Gastrocnemius medialis (tissue), 4 donors: ENCODE measurements at regions of chr1 and their contacts with region 1.

Region 1: DNA sequence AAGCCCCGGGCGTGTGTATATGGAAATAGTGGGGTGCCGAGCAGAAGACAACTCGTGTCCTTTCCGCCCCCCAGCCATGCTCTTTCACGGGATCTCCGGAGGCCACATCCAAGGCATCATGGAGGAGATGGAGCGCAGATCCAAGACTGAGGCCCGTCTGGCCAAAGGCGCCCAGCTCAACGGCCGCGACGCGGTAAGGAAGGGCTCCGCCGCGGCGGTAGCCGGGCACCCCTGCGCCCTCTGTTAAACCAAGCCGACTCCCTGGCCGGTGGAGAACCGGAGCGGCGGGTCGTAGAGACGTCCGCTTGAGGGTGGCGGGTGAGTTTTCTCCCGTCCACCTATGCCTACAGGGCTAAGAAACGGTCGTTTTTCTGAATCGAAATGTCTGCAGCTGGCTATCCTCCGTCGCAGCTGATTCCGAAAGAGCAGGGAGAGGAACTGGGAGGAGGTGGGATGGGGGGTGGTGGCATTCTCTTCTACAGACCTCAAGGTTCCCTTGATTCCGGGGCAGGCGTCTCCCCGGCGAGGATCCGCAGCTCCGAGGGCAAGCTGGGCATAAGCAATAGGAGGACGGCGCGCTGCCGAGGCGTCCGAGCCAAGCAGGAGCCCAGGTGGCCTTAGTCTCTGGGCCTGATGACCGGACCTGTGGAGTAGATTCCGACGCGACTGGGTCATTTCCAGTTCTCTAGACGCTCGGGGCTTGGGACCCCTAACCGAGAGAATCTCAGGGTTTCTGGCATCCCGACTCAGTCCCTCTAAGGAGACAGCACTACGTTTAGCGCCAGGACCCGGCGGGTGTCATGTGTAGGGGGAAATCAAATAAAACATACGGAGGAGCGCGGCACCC is 856 bp downstream of the LHX9 start:
- DNase-seq: no peak
- ATAC-seq: no peak
- H3K4me3 ChIP-seq: peak overlapping the region; percentile 33 to 59 (median 47)
- H3K27ac ChIP-seq: no peak overlapping the region
- H3K4me1 ChIP-seq: peaks cover 30 to 42% of the 10 kb centered on the region in 2 donors
- H3K27me3 ChIP-seq: peaks cover 96 to 100% (median 98%) of the 10 kb centered on the region in 3 donors
- CTCF ChIP-seq: no peak
- POLR2A ChIP-seq: no peak

Region 2: DNA sequence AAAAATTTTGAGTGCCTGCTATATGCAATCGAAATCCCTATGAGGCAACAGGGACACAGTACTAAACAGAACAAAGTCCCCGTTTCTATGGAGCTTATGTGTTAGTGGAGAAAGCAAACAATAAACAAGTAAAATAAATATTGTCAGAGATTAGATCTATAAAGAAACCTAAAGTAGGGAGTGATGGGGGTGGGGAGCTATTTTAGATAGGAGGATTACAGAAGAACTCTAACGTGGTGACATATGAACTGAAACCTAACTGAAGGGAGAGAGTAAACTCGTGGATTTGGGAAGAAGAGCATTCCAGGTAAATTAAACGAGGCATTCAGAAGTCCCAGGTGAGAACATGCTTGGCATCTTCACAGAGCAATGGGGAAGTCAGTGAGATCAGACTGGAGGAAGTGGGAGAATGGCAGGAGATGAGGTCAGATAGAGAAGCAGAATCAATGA is 297.3 kb before region 1 on chr1:
- in situ Hi-C with region 1: loop called in 1 of 4 experiments (anchors 5 kb)
- intact Hi-C with region 1: loop called (anchors 2 kb)
- DNase-seq: no peak
- ATAC-seq: no peak
- H3K4me3 ChIP-seq: no peak overlapping the region
- H3K27ac ChIP-seq: no peak overlapping the region
- H3K4me1 ChIP-seq: peaks cover 20 to 35% of the 10 kb centered on the region in 2 donors
- H3K27me3 ChIP-seq: no peaks in the 10 kb centered on the region
- CTCF ChIP-seq: no peak
- POLR2A ChIP-seq: no peak

Region 3: GRCh38 chr1:198359024-198359653 is 441.1 kb after region 1 on chr1:
- in situ Hi-C with region 1: no loop called
- intact Hi-C with region 1: no loop called
- DNase-seq: no peak
- ATAC-seq: no peak
- H3K4me3 ChIP-seq: no peak overlapping the region
- H3K27ac ChIP-seq: no peak overlapping the region
- H3K4me1 ChIP-seq: no peaks in the 10 kb centered on the region
- H3K27me3 ChIP-seq: no peaks in the 10 kb centered on the region
- CTCF ChIP-seq: peak; percentile 12 to 31 (median 28)
- POLR2A ChIP-seq: no peak